Activated B cell treated with CpG ODN at 0.5 μM for 24 hours (primary cell): ENCODE measurements at regions of chr15 and their contacts with region 1.

Region 1: DNA sequence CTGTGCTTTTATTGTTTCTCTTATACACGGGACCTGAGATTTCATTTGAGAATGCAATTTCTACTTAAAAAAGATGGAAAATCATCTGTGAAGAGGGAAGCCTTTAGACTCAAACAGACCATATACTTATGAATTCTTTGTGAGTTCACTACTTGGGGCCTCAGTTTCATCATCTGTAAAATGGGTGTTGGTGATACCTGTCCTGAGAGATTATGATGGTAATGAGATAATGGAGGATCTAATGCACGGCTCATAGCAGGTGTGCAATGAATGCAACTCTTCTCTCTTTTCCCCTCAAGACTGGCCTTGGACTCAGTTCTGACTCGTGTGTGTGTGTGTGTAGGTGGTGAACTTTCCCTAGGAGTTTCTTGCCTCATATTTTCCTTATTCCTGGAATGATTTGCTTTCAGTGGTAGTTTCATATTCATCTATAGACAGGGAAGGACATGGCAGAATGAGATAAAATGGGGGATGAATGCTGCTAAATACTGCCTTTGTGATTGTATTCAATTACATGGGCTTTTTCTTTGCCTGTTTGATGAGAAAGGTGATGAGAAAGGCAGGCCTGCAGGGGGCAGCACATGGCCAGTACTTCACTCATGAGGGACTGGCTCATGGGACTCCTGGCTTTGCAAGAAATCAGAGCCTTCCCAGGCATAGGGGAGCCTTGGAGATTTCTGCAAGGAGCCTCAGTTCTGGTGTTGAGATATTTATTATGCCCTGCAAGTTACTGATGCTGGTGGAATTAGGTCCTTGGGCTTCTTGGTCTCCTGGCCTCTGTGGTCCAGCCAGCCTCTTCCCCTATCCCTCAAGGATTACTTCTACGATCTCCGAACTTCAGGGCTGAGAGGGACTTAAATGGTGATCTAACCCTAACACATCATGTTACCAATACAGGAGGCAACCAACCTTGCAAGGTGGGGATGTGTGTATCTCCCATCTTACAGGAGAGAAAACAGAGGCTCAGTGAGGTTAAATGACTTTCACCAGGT is 70.7 kb downstream of the RPLP1 start:
- DNase-seq: peak; percentile 32
- ATAC-seq: peak; percentile 42
- H3K4me3 Mint-ChIP-seq: no peak overlapping the region
- H3K27ac Mint-ChIP-seq: no peak overlapping the region
- H3K4me1 Mint-ChIP-seq: no peaks in the 10 kb centered on the region
- H3K27me3 Mint-ChIP-seq: peaks cover 12% of the 10 kb centered on the region
- CTCF ChIP-seq: no peak

Region 2: DNA sequence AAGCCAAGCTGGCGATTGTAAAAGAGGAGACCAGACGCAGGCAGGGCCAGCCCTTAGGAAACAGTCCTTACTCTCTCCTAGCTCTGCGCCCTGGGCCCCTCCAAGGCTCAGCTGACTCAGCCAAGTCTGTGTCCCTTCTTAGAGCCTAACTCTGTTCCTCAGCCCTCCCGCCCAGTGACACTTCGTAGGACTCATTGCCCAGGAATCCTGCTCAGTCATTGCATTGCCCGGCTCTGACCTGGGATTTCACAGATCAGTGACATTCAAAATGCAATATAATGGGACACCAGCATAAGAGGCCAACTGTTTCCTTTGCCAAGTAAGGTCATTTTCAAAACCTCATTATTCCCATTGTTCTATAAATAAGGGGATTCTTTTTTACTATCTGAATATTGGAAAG is 330.3 kb after region 1 on chr15:
- CTCF ChIA-PET with region 1: no interaction called
- POLR2A ChIA-PET with region 1: no interaction called
- intact Hi-C with region 1: loop called (anchors 5 kb)
- DNase-seq: no peak
- ATAC-seq: no peak
- H3K4me3 Mint-ChIP-seq: no peak overlapping the region
- H3K27ac Mint-ChIP-seq: no peak overlapping the region
- H3K4me1 Mint-ChIP-seq: peaks cover 15% of the 10 kb centered on the region
- H3K27me3 Mint-ChIP-seq: no peaks in the 10 kb centered on the region
- CTCF ChIP-seq: no peak